ENCODE measurements at regions of chr2 and their contacts with region 1.

Region 1: GRCh38 chr2:127526149-127527000 is at the start of gene IWS1:
- DNase-seq: peak; percentile 85 to 95 (median 92)
- ATAC-seq: peak; percentile 94
- H3K4me3 ChIP-seq: peak within 1 kb of the TSS; percentile 87
- H3K4me3 Mint-ChIP-seq: peak within 1 kb of the TSS; percentile 81 to 99 (median 96)
- H3K27ac ChIP-seq: peak within 1 kb of the TSS; percentile 82
- H3K27ac Mint-ChIP-seq: peak within 1 kb of the TSS; percentile 87 to 99 (median 99)
- H3K4me1 ChIP-seq: peaks cover 6 to 9% of the 10 kb centered on the region in 2 donors
- H3K4me1 Mint-ChIP-seq: peaks cover 14 to 49% (median 43%) of the 10 kb centered on the region in 7 donors
- H3K27me3 ChIP-seq: no peaks in the 10 kb centered on the region
- H3K27me3 Mint-ChIP-seq: peaks cover 0 to 9% (median 0%) of the 10 kb centered on the region in 5 donors
- total RNA-seq, gene IWS1: 24.0 to 57.5 (median 43.4) TPM

Region 2: DNA sequence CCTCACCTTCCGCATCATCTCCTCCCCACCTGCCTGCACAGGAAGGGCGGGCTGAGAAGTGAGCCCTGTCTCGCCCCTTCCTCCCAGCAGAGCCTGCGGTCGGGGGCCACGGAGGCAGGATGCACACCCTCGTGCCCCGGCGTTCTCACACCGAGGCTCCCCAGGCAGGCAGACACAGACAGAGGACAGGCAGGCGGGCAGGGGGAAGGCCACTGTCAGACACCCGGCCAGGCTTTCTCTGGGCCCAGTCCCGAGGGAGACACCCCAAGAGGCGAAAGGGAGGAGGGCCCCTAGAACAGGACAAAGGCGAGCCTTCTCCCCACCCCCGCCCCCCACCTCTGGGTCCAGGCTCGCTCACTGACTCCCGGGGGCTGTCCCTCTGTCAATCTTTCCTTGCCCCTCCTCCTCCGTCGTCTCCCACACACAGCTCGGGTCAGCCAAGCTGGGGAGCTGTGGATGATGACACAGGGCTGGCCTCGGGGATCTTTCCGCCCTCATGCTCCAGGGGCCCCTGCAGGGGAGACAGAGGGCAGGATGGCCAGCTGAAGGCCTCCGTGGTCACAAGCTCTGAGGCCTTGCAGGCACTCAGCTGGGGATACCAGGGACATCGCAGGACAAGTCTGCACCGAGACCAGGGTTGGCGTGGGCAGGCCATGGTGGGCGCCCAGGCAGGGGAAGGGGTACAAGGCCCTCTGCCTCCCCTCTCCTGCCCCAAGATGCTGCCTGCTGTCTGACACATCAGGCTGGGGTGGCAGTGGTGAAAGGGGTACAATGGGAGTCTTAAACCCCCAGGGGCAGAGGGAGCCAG is 444.3 kb before region 1 on chr2:
- CTCF ChIA-PET with region 1: no interaction called
- POLR2A ChIA-PET with region 1: interaction called, 6 read pairs
- intact Hi-C with region 1: loop called (anchors 5 to 10 kb)
- DNase-seq: peak; percentile 64 to 87 (median 83)
- ATAC-seq: peak; percentile 83
- H3K4me3 ChIP-seq: peak overlapping the region; percentile 99
- H3K4me3 Mint-ChIP-seq: peak overlapping the region; percentile 89 to 97 (median 94)
- H3K27ac ChIP-seq: peak overlapping the region; percentile 89
- H3K27ac Mint-ChIP-seq: peak overlapping the region; percentile 94 to 99 (median 98)
- H3K4me1 ChIP-seq: peaks cover 78 to 80% of the 10 kb centered on the region in 2 donors
- H3K4me1 Mint-ChIP-seq: peaks cover 65 to 95% (median 83%) of the 10 kb centered on the region in 7 donors
- H3K27me3 ChIP-seq: no peaks in the 10 kb centered on the region
- H3K27me3 Mint-ChIP-seq: no peaks in the 10 kb centered on the region

Region 3: GRCh38 chr2:127415593-127416505 is 110.5 kb before region 1 on chr2:
- CTCF ChIA-PET with region 1: no interaction called
- POLR2A ChIA-PET with region 1: interaction called, 3 read pairs
- intact Hi-C with region 1: loop called in 1 of 2 experiments (anchors 2 kb)
- DNase-seq: peak; percentile 66 to 84 (median 80)
- ATAC-seq: peak; percentile 94
- H3K4me3 ChIP-seq: peak overlapping the region; percentile 67
- H3K4me3 Mint-ChIP-seq: peak overlapping the region; percentile 76 to 91 (median 84)
- H3K27ac ChIP-seq: peak overlapping the region; percentile 61
- H3K27ac Mint-ChIP-seq: peak overlapping the region in 7 of 9 donors; percentile 21 to 82 (median 42)
- H3K4me1 ChIP-seq: peaks cover 0 to 7% of the 10 kb centered on the region in 2 donors
- H3K4me1 Mint-ChIP-seq: peaks cover 14 to 34% (median 19%) of the 10 kb centered on the region in 7 donors
- H3K27me3 ChIP-seq: no peaks in the 10 kb centered on the region
- H3K27me3 Mint-ChIP-seq: peaks cover 5 to 35% (median 10%) of the 10 kb centered on the region in 5 donors

Region 4: GRCh38 chr2:127545189-127545588 is 18.8 kb after region 1 on chr2:
- CTCF ChIA-PET with region 1: no interaction called
- POLR2A ChIA-PET with region 1: no interaction called
- intact Hi-C with region 1: no loop called
- DNase-seq: no peak
- ATAC-seq: no peak
- H3K4me3 ChIP-seq: no peak overlapping the region
- H3K4me3 Mint-ChIP-seq: no peak overlapping the region
- H3K27ac ChIP-seq: no peak overlapping the region
- H3K27ac Mint-ChIP-seq: no peak overlapping the region
- H3K4me1 ChIP-seq: no peaks in the 10 kb centered on the region
- H3K4me1 Mint-ChIP-seq: no peaks in the 10 kb centered on the region
- H3K27me3 ChIP-seq: no peaks in the 10 kb centered on the region
- H3K27me3 Mint-ChIP-seq: peaks cover 4 to 47% (median 16%) of the 10 kb centered on the region in 5 donors

Region 5: GRCh38 chr2:127591221-127591923 is 65.0 kb after region 1 on chr2:
- CTCF ChIA-PET with region 1: interaction called, 3 read pairs
- POLR2A ChIA-PET with region 1: no interaction called
- intact Hi-C with region 1: loop called in 1 of 2 experiments (anchors 5 kb)
- DNase-seq: peak; percentile 42 to 79 (median 67)
- ATAC-seq: peak; percentile 92
- H3K4me3 ChIP-seq: no peak overlapping the region
- H3K4me3 Mint-ChIP-seq: no peak overlapping the region
- H3K27ac ChIP-seq: no peak overlapping the region
- H3K27ac Mint-ChIP-seq: peak overlapping the region in 5 of 9 donors; percentile 18 to 69 (median 36)
- H3K4me1 ChIP-seq: no peaks in the 10 kb centered on the region
- H3K4me1 Mint-ChIP-seq: peaks cover 0 to 17% (median 4%) of the 10 kb centered on the region in 7 donors
- H3K27me3 ChIP-seq: no peaks in the 10 kb centered on the region
- H3K27me3 Mint-ChIP-seq: no peaks in the 10 kb centered on the region

Region 6: GRCh38 chr2:127695491-127696472 is 169.4 kb after region 1 on chr2:
- CTCF ChIA-PET with region 1: no interaction called
- POLR2A ChIA-PET with region 1: no interaction called
- intact Hi-C with region 1: no loop called
- DNase-seq: peak in 8 of 9 donors; percentile 14 to 58 (median 52)
- ATAC-seq: peak; percentile 44
- H3K4me3 ChIP-seq: no peak overlapping the region
- H3K4me3 Mint-ChIP-seq: peak overlapping the region in 5 of 10 donors; percentile 35 to 54 (median 38)
- H3K27ac ChIP-seq: no peak overlapping the region
- H3K27ac Mint-ChIP-seq: no peak overlapping the region
- H3K4me1 ChIP-seq: peaks cover 4 to 6% of the 10 kb centered on the region in 2 donors
- H3K4me1 Mint-ChIP-seq: peaks cover 0 to 13% (median 8%) of the 10 kb centered on the region in 7 donors
- H3K27me3 ChIP-seq: no peaks in the 10 kb centered on the region
- H3K27me3 Mint-ChIP-seq: peaks cover 0 to 3% (median 0%) of the 10 kb centered on the region in 5 donors

Region 7: GRCh38 chr2:127810619-127811396 is 284.4 kb after region 1 on chr2 and contains the start of gene WDR33:
- CTCF ChIA-PET with region 1: no interaction called
- POLR2A ChIA-PET with region 1: no interaction called
- intact Hi-C with region 1: loop called (anchors 1 kb)
- DNase-seq: peak; percentile 84 to 94 (median 93)
- ATAC-seq: peak; percentile 97
- H3K4me3 ChIP-seq: peak within 1 kb of the TSS; percentile 79
- H3K4me3 Mint-ChIP-seq: peak within 1 kb of the TSS; percentile 91 to 100 (median 96)
- H3K27ac ChIP-seq: peak within 1 kb of the TSS; percentile 98
- H3K27ac Mint-ChIP-seq: peak within 1 kb of the TSS; percentile 94 to 100 (median 99)
- H3K4me1 ChIP-seq: peaks cover 17 to 24% of the 10 kb centered on the region in 2 donors
- H3K4me1 Mint-ChIP-seq: peaks cover 33 to 62% (median 51%) of the 10 kb centered on the region in 7 donors
- H3K27me3 ChIP-seq: no peaks in the 10 kb centered on the region
- H3K27me3 Mint-ChIP-seq: peaks cover 0 to 12% (median 0%) of the 10 kb centered on the region in 5 donors
- total RNA-seq, gene WDR33: 62.6 to 98.7 (median 72.3) TPM

Region 8: GRCh38 chr2:128090945-128091725 is 564.8 kb after region 1 on chr2 and contains the start of gene UGGT1:
- CTCF ChIA-PET with region 1: no interaction called
- POLR2A ChIA-PET with region 1: interaction called, 4 read pairs
- intact Hi-C with region 1: loop called (anchors 1 to 10 kb)
- DNase-seq: peak; percentile 75 to 94 (median 92)
- ATAC-seq: peak; percentile 99
- H3K4me3 ChIP-seq: peak within 1 kb of the TSS; percentile 86
- H3K4me3 Mint-ChIP-seq: peak within 1 kb of the TSS; percentile 88 to 98 (median 94)
- H3K27ac ChIP-seq: peak within 1 kb of the TSS; percentile 75
- H3K27ac Mint-ChIP-seq: peak within 1 kb of the TSS; percentile 91 to 97 (median 94)
- H3K4me1 ChIP-seq: peaks cover 13 to 18% of the 10 kb centered on the region in 2 donors
- H3K4me1 Mint-ChIP-seq: peaks cover 27 to 60% (median 56%) of the 10 kb centered on the region in 7 donors
- H3K27me3 ChIP-seq: no peaks in the 10 kb centered on the region
- H3K27me3 Mint-ChIP-seq: no peaks in the 10 kb centered on the region
- total RNA-seq, gene UGGT1: 38.1 to 75.6 (median 46.6) TPM

Measured in naive thymus-derived CD4-positive, alpha-beta T cell (primary cell).